Dendritic cell treated with granulocyte-macrophage colony-stimulating factor and Interleukin-4, amounts not matched to agents 40 ng/mL and 50 ng/mL, for 4 days (primary cell): ENCODE measurements at regions of chr5 and their contacts with region 1.

Region 1: GRCh38 chr5:54905943-54906537 is 79.4 kb downstream of the ESM1 start:
- H3K4me3 Mint-ChIP-seq: no peak overlapping the region
- H3K27ac Mint-ChIP-seq: no peak overlapping the region
- H3K4me1 Mint-ChIP-seq: peaks cover 11% of the 10 kb centered on the region
- H3K27me3 Mint-ChIP-seq: peaks cover 11% of the 10 kb centered on the region

Region 2: DNA sequence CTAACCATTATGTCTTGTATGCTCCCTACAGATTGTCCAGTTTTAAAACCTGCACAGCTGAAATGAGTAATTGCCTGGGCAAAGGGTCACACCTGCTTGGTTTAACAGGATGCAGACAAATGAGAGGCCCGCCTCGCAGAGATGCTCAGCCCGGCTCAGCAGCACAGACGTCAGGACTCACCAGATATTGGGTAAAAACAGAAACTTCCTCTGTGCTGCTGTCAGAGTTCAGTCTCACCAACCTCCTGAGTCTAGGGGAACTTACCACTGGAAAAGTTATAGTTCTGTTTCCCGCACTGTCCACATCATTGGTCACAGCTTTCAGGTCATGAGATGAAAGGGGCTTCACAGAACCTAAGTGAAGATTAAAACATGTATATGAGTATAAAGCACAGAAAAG is 73.2 kb before region 1 on chr5:
- intact Hi-C with region 1: no loop called
- H3K4me3 Mint-ChIP-seq: no peak overlapping the region
- H3K27ac Mint-ChIP-seq: no peak overlapping the region
- H3K4me1 Mint-ChIP-seq: peaks cover 41% of the 10 kb centered on the region
- H3K27me3 Mint-ChIP-seq: peaks cover 2% of the 10 kb centered on the region

Region 3: GRCh38 chr5:55146543-55147151 is 240.6 kb after region 1 on chr5:
- intact Hi-C with region 1: loop called (anchors 1 kb)
- H3K4me3 Mint-ChIP-seq: no peak overlapping the region
- H3K27ac Mint-ChIP-seq: no peak overlapping the region
- H3K4me1 Mint-ChIP-seq: peaks cover 5% of the 10 kb centered on the region
- H3K27me3 Mint-ChIP-seq: peaks cover 18% of the 10 kb centered on the region

Region 4: GRCh38 chr5:55276771-55277170 is 370.7 kb after region 1 on chr5:
- intact Hi-C with region 1: no loop called
- H3K4me3 Mint-ChIP-seq: no peak overlapping the region
- H3K27ac Mint-ChIP-seq: no peak overlapping the region
- H3K4me1 Mint-ChIP-seq: no peaks in the 10 kb centered on the region
- H3K27me3 Mint-ChIP-seq: no peaks in the 10 kb centered on the region